ENCODE measurements at regions of chr15 and their contacts with region 1.

Region 1: DNA sequence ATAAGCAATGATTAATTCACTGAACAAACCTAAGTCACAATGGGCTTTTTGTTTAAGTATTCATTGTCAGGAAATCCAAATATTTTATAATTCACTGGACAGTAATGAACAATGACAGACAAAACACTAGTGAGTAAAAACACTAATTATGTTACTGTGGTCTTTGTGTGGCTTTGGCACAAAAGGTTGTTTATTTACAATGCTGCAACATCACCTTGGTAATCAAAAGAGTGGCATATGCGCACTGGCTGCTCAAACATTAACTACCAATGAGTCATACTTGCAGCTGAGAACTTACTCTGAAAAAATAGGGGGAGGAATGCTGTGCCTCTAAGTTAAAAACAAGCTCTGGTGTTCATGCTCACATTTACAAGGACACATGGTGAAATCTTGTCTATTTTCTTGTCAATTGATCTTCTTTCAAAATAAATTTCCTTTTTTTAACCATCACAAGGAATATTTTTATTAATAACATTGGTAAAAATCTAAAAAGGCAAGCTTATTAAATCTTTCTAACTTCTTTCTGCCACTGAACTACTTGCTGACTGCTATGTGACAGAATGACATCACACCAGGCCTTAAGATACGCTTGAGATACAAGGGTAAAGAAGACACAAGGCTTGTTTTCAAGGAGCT is 85.2 kb upstream of the PPIB start:
- DNase-seq: peak; percentile 22
- H3K4me3 Mint-ChIP-seq: no peak overlapping the region
- H3K27ac Mint-ChIP-seq: peak overlapping the region; percentile 47
- H3K4me1 Mint-ChIP-seq: peaks cover 48% of the 10 kb centered on the region
- H3K27me3 Mint-ChIP-seq: no peaks in the 10 kb centered on the region

Region 2: GRCh38 chr15:63582718-63583426 is 665.2 kb before region 1 on chr15:
- intact Hi-C with region 1: no loop called
- DNase-seq: no peak
- H3K4me3 Mint-ChIP-seq: no peak overlapping the region
- H3K27ac Mint-ChIP-seq: peak overlapping the region; percentile 38
- H3K4me1 Mint-ChIP-seq: peaks cover 3% of the 10 kb centered on the region
- H3K27me3 Mint-ChIP-seq: no peaks in the 10 kb centered on the region

Region 3: DNA sequence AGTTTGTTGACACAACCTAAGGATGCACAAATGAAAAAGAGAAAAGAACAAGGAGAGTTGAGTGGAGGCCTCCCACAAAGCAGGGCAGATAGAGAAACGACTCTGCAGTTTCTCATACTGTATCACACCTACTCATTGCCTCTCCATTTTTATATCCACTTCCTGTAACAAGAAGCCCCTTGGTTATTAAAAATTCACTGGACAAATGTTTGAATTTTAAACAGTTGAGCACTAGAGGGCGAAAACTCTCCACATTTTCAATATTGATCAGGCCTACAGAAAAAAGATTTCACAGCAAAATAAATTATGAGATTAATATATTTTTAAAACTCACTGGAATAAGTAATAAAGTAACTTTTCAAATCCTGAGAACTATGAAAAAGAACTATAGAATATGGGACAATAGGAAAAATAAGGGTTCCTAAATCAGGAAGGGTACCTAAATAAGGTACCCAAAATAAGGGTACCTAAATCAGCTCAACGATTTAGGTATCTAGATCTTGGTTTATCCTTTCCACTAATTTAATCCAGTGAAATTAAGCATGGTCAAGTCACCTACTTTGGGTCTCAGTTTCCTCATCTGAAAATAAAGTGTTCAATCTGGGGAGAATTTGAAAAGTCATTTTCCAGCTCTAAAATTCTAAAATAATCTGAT is 38.2 kb before region 1 on chr15:
- intact Hi-C with region 1: loop called (anchors 5 kb)
- DNase-seq: no peak
- H3K4me3 Mint-ChIP-seq: no peak overlapping the region
- H3K27ac Mint-ChIP-seq: no peak overlapping the region
- H3K4me1 Mint-ChIP-seq: peaks cover 30% of the 10 kb centered on the region
- H3K27me3 Mint-ChIP-seq: no peaks in the 10 kb centered on the region

Region 4: GRCh38 chr15:64263567-64263966 is 15.5 kb after region 1 on chr15:
- intact Hi-C with region 1: loop called (anchors 1 kb)
- DNase-seq: no peak
- H3K4me3 Mint-ChIP-seq: no peak overlapping the region
- H3K27ac Mint-ChIP-seq: no peak overlapping the region
- H3K4me1 Mint-ChIP-seq: peaks cover 32% of the 10 kb centered on the region
- H3K27me3 Mint-ChIP-seq: no peaks in the 10 kb centered on the region

Region 5: GRCh38 chr15:64443747-64444621 is 196.0 kb after region 1 on chr15:
- intact Hi-C with region 1: loop called (anchors 2 kb)
- DNase-seq: no peak
- H3K4me3 Mint-ChIP-seq: peak overlapping the region; percentile 77
- H3K27ac Mint-ChIP-seq: peak overlapping the region; percentile 97
- H3K4me1 Mint-ChIP-seq: peaks cover 45% of the 10 kb centered on the region
- H3K27me3 Mint-ChIP-seq: no peaks in the 10 kb centered on the region

Region 6: DNA sequence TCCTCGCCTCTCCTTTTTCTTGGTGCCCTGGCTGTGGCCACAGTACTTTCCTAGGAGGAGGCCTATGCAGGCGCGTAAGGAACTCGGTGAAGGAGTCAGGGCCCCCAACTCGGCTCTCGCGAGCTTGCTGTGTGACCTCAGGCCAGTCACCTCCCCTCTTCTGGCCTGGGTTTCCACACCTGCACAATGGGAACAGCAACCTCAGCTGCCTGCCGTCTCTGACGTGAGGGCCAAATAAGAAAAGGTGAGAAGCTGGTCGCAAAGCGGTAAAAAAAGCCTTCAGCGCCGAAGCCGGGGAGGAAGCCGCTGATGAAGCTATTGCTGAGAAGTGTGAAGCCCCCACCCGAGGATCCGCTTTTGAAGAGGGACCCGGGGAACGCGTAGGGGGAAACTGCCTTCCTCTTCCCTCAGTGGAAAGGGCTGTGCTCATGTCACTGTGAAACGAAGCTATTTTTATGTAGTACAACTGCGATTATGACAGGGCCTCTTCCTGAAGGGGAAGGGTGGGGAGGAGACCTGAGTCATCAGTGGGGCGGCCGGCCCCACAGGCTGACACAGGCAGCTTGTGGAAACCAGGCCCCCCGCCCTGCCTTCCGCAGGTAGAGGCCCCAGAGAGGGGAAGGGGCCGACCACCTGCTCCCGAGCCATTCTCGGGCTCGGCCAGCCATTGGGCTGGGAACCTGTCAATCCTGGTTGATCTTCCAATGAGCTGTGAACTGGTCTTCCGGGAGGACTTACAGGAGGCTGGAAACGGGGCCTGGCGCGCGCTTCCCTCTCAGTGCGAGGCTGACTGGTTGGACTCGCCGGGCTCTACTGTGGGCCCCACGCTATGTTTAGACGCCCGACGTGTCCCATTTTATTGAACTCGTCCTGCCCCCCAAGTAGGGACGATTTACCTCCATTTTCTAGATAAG is 645.7 kb after region 1 on chr15:
- intact Hi-C with region 1: loop called (anchors 5 kb)
- DNase-seq: peak; percentile 97
- H3K4me3 Mint-ChIP-seq: peak overlapping the region; percentile 86
- H3K27ac Mint-ChIP-seq: peak overlapping the region; percentile 96
- H3K4me1 Mint-ChIP-seq: peaks cover 62% of the 10 kb centered on the region
- H3K27me3 Mint-ChIP-seq: no peaks in the 10 kb centered on the region

Measured in activated T-helper 2 cell treated with anti-CD3 and anti-CD28 coated beads, Interferon-gamma antibody, Interleukin-2, Interleukin-4, amounts not matched to agents 10 μg/mL and 5 μg/mL and 100 μg/mL, durations not matched to agents 14 hours and 24 hours and 36 hours (primary cell).